A673 (cell line): ENCODE measurements at regions of chr2 and their contacts with region 1.

Region 1: GRCh38 chr2:47323009-47323821 is 79.7 kb upstream of the MSH2 start:
- DNase-seq: peak; percentile 77
- H3K4me3 ChIP-seq: no peak overlapping the region
- H3K27ac ChIP-seq: no peak overlapping the region
- H3K4me1 ChIP-seq: no peaks in the 10 kb centered on the region
- H3K27me3 ChIP-seq: no peaks in the 10 kb centered on the region
- CTCF ChIP-seq: peak; percentile 94

Region 2: DNA sequence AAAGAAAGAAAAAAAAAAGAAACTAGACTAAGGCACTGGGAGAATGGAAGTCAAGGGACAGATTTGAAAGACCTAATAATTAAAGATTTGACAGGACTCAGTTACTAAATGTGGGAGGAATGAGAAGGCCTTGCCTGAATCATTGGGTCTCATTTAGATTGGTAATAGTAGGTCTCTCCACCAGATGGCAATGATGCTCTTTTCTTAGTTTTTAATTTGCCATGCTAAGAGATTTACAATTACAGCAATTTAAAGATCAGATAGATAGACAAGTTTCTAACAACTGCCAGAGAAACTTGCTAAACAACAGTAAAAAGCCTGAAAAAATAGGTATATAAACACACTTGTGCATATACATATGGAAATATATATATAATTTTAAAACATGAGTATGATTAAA is 690.9 kb before region 1 on chr2:
- CTCF ChIA-PET with region 1: no interaction called
- POLR2A ChIA-PET with region 1: no interaction called
- intact Hi-C with region 1: loop called (anchors 10 kb)
- DNase-seq: peak; percentile 61
- H3K4me3 ChIP-seq: no peak overlapping the region
- H3K27ac ChIP-seq: no peak overlapping the region
- H3K4me1 ChIP-seq: no peaks in the 10 kb centered on the region
- H3K27me3 ChIP-seq: no peaks in the 10 kb centered on the region
- CTCF ChIP-seq: peak; percentile 62

Region 3: DNA sequence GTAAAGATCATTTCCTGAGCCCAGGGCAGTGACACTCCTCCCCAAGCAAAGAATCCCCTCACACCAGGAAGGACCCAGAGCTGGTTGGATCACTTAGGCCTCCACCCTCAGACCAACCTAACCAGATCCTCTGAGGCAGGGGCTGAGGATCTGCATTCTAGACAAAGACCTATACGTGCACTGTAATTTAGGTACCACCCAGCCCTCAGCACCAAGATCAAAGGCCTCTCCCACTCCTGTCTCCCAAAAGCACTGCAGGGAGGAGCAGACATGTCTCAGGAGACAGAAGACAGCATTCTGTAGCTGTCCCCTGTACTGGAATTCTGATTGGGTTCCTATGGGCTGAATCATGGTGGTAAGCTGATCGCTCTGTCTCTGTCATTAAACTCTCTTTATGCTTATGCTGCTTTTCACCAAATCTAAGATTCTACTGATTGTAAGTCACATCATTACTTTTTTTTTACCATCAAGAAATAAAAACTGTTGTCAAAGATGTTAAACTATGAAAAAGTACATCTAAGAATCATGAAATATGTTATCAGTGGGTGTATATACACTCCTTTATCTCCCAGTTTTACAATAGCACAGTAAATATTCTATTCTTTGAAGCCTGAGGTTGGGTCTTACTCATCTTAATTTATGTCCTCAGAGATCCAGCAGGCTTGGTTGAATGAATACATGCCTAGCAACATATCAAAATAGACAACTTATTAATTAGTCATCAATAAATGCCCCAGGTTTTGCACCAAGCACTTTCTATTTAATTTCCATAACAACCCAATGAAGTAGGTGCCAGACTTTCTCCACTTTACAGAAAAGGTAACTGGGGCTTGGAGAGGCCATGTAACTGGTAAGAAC is 436.0 kb before region 1 on chr2:
- CTCF ChIA-PET with region 1: no interaction called
- POLR2A ChIA-PET with region 1: no interaction called
- intact Hi-C with region 1: loop called (anchors 1 kb)
- DNase-seq: no peak
- H3K4me3 ChIP-seq: no peak overlapping the region
- H3K27ac ChIP-seq: no peak overlapping the region
- H3K4me1 ChIP-seq: no peaks in the 10 kb centered on the region
- H3K27me3 ChIP-seq: peaks cover 8% of the 10 kb centered on the region
- CTCF ChIP-seq: no peak

Region 4: GRCh38 chr2:46917628-46918027 is 405.6 kb before region 1 on chr2:
- CTCF ChIA-PET with region 1: interaction called, 7 read pairs
- POLR2A ChIA-PET with region 1: no interaction called
- intact Hi-C with region 1: loop called (anchors 2 kb)
- DNase-seq: no peak
- H3K4me3 ChIP-seq: no peak overlapping the region
- H3K27ac ChIP-seq: no peak overlapping the region
- H3K4me1 ChIP-seq: peaks cover 14% of the 10 kb centered on the region
- H3K27me3 ChIP-seq: no peaks in the 10 kb centered on the region
- CTCF ChIP-seq: no peak

Region 5: GRCh38 chr2:47379384-47379783 is 56.2 kb after region 1 on chr2:
- CTCF ChIA-PET with region 1: no interaction called
- POLR2A ChIA-PET with region 1: no interaction called
- intact Hi-C with region 1: no loop called
- DNase-seq: no peak
- H3K4me3 ChIP-seq: no peak overlapping the region
- H3K27ac ChIP-seq: no peak overlapping the region
- H3K4me1 ChIP-seq: no peaks in the 10 kb centered on the region
- H3K27me3 ChIP-seq: no peaks in the 10 kb centered on the region
- CTCF ChIP-seq: no peak